KBM-7 (cell line): ENCODE measurements at regions of chr1 and their contacts with region 1.

Region 1: GRCh38 chr1:119327436-119328155 is 41.0 kb upstream of the HAO2 start:
- DNase-seq: no peak

Region 2: GRCh38 chr1:119225831-119226230 is 101.8 kb before region 1 on chr1:
- in situ Hi-C with region 1: loop called (anchors 25 kb)
- DNase-seq: no peak